ENCODE measurements at regions of chr18 and their contacts with region 1.

Region 1: DNA sequence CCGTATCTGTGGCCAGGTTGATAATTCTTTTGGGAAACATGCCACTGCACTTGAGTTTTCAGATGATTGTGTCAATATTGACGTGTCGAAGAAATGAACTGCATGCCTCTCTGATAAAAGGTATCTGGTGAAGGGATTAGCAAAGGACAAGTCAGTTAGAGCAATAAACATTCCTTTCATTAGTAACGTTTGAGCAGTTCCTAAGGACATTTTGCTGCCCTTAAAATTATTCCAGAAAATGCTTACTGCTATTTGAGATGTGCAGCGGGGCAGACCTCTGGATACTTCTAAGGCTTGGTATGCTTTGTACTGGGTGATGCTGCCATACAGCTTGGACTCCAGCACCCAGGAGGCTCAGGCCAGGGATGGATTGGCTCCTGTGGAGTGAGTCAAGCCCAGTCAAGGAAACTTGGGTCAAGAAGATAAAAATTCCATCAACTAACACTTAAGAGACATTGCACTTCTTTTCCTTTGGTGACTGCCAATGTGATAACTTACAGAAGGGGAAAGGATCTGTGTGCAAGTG is 166.7 kb downstream of the FHOD3 start:
- DNase-seq: peak in 1 of 2 donors; percentile 43
- H3K4me3 ChIP-seq: no peak overlapping the region
- H3K27ac ChIP-seq: no peak overlapping the region
- H3K4me1 ChIP-seq: no peaks in the 10 kb centered on the region
- H3K27me3 ChIP-seq: no peaks in the 10 kb centered on the region
- CTCF ChIP-seq: no peak

Region 2: GRCh38 chr18:36441426-36442240 is 22.6 kb before region 1 on chr18:
- intact Hi-C with region 1: loop called (anchors 2 kb)
- DNase-seq: no peak
- H3K4me3 ChIP-seq: peak overlapping the region; percentile 2 to 27
- H3K27ac ChIP-seq: peak overlapping the region; percentile 78 to 85
- H3K4me1 ChIP-seq: peaks cover 23 to 52% of the 10 kb centered on the region in 2 donors
- H3K27me3 ChIP-seq: no peaks in the 10 kb centered on the region
- CTCF ChIP-seq: no peak

Region 3: DNA sequence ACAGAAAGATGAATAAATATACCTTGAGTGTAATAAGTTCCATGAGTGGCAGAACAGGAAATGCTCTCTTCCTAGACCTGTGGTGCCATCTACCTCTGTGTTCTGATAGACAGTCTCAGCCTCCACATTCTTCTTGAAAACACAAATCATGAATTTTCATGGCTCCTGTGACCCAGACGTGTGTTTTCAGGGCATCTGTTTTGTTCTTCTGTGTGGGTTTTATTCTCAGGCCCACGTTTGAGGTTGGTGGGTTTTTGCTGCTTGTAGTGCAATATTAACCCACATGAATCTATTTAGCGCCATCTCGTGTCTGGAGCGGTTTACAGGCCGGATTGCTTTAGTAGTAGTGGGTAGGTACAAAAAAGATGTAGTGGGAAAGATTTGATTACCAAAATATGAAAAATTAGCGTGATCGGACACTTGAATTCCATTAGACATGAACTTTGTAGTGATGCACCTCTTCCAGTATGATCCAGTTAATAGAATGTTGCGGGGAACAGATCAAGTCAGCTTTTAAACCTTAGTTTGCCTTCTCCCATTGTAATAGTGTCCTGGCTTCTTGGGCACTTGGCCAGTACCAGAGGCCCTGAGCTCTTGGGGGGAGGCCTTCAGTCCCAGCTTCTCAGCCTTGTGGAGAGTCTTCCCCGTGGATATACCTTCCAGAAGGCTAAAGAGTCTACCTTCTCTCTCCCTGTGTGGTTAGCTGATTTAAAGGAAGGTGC is 108.1 kb after region 1 on chr18:
- intact Hi-C with region 1: loop called (anchors 5 kb)
- DNase-seq: peak in 1 of 2 donors; percentile 76
- H3K4me3 ChIP-seq: no peak overlapping the region
- H3K27ac ChIP-seq: peak overlapping the region; percentile 13 to 54
- H3K4me1 ChIP-seq: no peaks in the 10 kb centered on the region
- H3K27me3 ChIP-seq: no peaks in the 10 kb centered on the region
- CTCF ChIP-seq: peak; percentile 38 to 80 (median 52)